CD14-positive monocyte (primary cell): ENCODE measurements at regions of chr22 and their contacts with region 1.

Region 1: GRCh38 chr22:24536089-24536488 is 18.8 kb downstream of the GUCD1 start:
- DNase-seq: no peak
- H3K4me3 ChIP-seq: no peak overlapping the region
- H3K4me3 Mint-ChIP-seq: no peak overlapping the region
- H3K27ac ChIP-seq: no peak overlapping the region
- H3K27ac Mint-ChIP-seq: no peak overlapping the region
- H3K4me1 ChIP-seq: peaks cover 2 to 4% of the 10 kb centered on the region in 2 donors
- H3K4me1 Mint-ChIP-seq: peaks cover 8% of the 10 kb centered on the region
- H3K27me3 ChIP-seq: no peaks in the 10 kb centered on the region
- H3K27me3 Mint-ChIP-seq: peaks cover 0 to 2% (median 2%) of the 10 kb centered on the region in 3 donors
- CTCF ChIP-seq: no peak

Region 2: GRCh38 chr22:24482575-24482974 is 53.5 kb before region 1 on chr22:
- intact Hi-C with region 1: no loop called
- DNase-seq: peak; percentile 77 to 92 (median 91)
- H3K4me3 ChIP-seq: peak overlapping the region in 1 of 3 experiments; percentile 43
- H3K4me3 Mint-ChIP-seq: peak overlapping the region in 1 of 2 donors; percentile 61
- H3K27ac ChIP-seq: peak overlapping the region in 1 of 2 donors; percentile 80
- H3K27ac Mint-ChIP-seq: peak overlapping the region; percentile 75 to 93 (median 88)
- H3K4me1 ChIP-seq: peaks cover 58 to 64% of the 10 kb centered on the region in 2 donors
- H3K4me1 Mint-ChIP-seq: peaks cover 58% of the 10 kb centered on the region
- H3K27me3 ChIP-seq: no peaks in the 10 kb centered on the region
- H3K27me3 Mint-ChIP-seq: peaks cover 0 to 3% (median 0%) of the 10 kb centered on the region in 3 donors
- CTCF ChIP-seq: no peak

Region 3: DNA sequence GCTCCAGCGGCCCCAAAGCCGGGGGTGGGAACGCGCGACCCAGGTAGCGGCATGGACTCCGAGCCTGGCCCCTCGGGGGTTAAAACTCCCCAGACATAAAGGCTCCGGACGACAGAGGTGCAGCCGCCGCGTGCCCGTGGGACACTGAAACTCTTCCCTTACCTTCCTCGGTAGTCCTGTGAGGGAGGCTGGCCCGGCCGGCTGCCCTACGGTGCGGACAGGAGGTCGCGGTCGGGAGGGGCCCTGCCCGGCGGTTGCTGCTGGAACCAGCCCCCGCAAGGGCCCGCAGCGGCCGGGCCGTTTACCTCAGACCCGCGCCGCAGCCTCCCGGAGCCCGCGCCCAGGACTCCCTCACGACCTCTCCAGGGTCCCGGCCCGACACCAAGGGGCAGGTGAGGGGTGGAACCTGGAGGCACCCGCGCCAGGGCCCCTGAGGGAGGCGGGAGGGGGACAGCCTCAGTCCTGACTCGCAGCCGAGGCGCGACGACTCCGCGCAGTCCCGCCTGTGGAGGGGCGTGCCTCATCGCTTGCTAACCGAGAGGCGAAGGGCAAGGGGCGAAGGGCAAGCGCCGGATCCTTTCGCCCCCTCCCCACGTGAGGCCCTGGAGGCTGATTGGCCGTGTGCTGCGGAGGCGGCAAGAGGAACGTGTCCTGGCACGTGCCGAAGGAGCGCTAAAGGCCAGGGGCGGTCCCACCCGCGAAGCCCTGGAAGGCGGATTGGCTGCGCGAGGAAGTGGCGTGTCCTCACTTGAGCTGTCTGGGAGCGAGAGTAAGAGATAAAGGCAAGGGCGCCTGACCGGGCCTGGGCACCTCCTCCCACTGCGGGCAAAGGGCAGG is 41.3 kb before region 1 on chr22 and contains the start of gene UPB1:
- intact Hi-C with region 1: loop called in 1 of 2 experiments (anchors 5 kb)
- DNase-seq: no peak
- H3K4me3 ChIP-seq: peak within 1 kb of the TSS in 1 of 3 experiments; percentile 38
- H3K4me3 Mint-ChIP-seq: peak within 1 kb of the TSS; percentile 1 to 76
- H3K27ac ChIP-seq: no peak within 1 kb of the TSS
- H3K27ac Mint-ChIP-seq: peak within 1 kb of the TSS in 1 of 7 donors; percentile 77
- H3K4me1 ChIP-seq: peaks cover 25 to 29% of the 10 kb centered on the region in 2 donors
- H3K4me1 Mint-ChIP-seq: peaks cover 34% of the 10 kb centered on the region
- H3K27me3 ChIP-seq: peaks cover 12 to 23% of the 10 kb centered on the region in 2 donors
- H3K27me3 Mint-ChIP-seq: peaks cover 36 to 40% (median 39%) of the 10 kb centered on the region in 3 donors
- CTCF ChIP-seq: no peak
- polyA plus RNA-seq, gene UPB1: 0.13 to 0.17 TPM in 2 of 3 donors, not detected in the other